H1 (cell line): ENCODE measurements at regions of chr14 and their contacts with region 1.

Region 1: GRCh38 chr14:22026527-22026926 is 352.9 kb upstream of the OR4E1 start:
- DNase-seq: no peak
- H3K4me3 ChIP-seq: no peak overlapping the region
- H3K27ac ChIP-seq: no peak overlapping the region
- H3K4me1 ChIP-seq: no peaks in the 10 kb centered on the region
- H3K27me3 ChIP-seq: no peaks in the 10 kb centered on the region
- CTCF ChIP-seq: no peak
- EP300 ChIP-seq: no peak
- POLR2A ChIP-seq: no peak
- RAD21 ChIP-seq: no peak

Region 2: DNA sequence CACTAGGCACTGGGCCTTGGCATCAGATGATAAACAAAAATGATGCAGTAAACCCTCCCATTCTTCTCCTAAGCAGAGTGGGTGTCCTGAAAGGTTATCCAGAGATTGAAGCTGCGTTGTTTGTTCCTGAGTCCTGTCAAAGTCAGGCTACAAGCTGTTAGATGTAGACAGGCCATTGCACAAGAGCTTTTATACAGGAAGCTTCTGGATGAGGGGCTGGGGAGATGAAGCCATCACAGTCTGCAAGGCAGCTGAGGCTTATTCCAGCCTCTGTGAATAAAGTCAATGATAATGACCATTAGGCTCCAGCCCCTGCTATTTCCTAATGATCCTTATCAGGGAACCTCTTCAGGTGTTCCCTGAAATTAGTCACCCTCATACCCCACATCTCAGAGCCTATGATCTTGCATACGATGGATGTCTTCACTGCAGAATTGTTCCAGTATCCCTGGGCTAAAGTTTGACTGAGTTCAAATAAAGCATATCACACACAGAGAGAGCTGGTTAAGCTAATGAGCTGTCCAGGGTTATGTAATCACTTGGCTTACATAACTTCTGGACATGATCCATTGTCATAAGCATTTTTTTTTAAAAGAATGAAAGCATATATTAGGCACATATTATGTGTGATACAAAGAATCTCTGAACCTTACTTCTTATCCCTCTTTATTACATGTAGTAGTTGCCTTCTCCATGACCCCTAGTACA is 15.8 kb before region 1 on chr14:
- CTCF ChIA-PET with region 1: interaction called, 16 read pairs
- POLR2A ChIA-PET with region 1: no interaction called
- DNase-seq: no peak
- H3K4me3 ChIP-seq: no peak overlapping the region
- H3K27ac ChIP-seq: no peak overlapping the region
- H3K4me1 ChIP-seq: no peaks in the 10 kb centered on the region
- H3K27me3 ChIP-seq: no peaks in the 10 kb centered on the region
- CTCF ChIP-seq: no peak
- EP300 ChIP-seq: no peak
- POLR2A ChIP-seq: no peak
- RAD21 ChIP-seq: no peak

Region 3: GRCh38 chr14:22039938-22040775 is 13.6 kb after region 1 on chr14:
- CTCF ChIA-PET with region 1: interaction called, 29 read pairs
- POLR2A ChIA-PET with region 1: no interaction called
- DNase-seq: no peak
- H3K4me3 ChIP-seq: no peak overlapping the region
- H3K27ac ChIP-seq: no peak overlapping the region
- H3K4me1 ChIP-seq: no peaks in the 10 kb centered on the region
- H3K27me3 ChIP-seq: no peaks in the 10 kb centered on the region
- CTCF ChIP-seq: peak in 2 of 3 experiments; percentile 49 to 59; a peak in 3 of 4 replicates
- EP300 ChIP-seq: no peak
- POLR2A ChIP-seq: no peak
- RAD21 ChIP-seq: peak in 1 of 2 experiments; percentile 30; a peak in 2 of 4 replicates